Activated CD8-positive, alpha-beta memory T cell treated with anti-CD3 and anti-CD28 coated beads, Interleukin-2, amount 10 ng/mL, durations not matched to agents 7 days and 5 days (primary cell): ENCODE measurements at regions of chr12 and their contacts with region 1.

Region 1: DNA sequence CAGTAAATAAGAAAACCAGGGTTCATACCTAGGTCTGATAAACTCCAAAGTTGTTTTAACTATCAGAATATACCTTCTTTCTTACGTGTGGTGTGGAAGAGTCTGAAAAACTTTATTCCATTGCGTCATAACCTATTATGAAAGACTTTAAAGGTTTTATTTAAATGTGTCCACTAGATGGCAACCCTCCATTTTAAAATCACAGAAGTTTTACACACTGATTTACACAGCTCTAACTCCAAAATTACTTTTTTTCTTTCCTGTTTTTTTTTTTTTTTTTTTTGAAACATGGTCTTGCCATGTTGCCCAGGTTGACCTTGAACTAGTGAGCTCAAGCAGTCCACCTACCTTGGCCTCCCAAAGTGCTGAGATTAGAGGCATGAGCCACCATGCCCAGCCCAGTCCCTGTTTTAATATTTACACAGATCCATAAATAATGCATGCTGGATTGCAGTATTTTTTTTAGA is 17.3 kb upstream of the TMPRSS12 start:
- DNase-seq: no peak
- ATAC-seq: peak; percentile 69
- H3K4me3 Mint-ChIP-seq: no peak overlapping the region
- H3K27ac Mint-ChIP-seq: peak overlapping the region; percentile 38
- H3K4me1 Mint-ChIP-seq: peaks cover 4% of the 10 kb centered on the region
- H3K27me3 Mint-ChIP-seq: no peaks in the 10 kb centered on the region

Region 2: GRCh38 chr12:50916292-50916691 is 90.9 kb after region 1 on chr12:
- CTCF ChIA-PET with region 1: no interaction called
- DNase-seq: no peak
- ATAC-seq: no peak
- H3K4me3 Mint-ChIP-seq: no peak overlapping the region
- H3K27ac Mint-ChIP-seq: no peak overlapping the region
- H3K4me1 Mint-ChIP-seq: peaks cover 12% of the 10 kb centered on the region
- H3K27me3 Mint-ChIP-seq: no peaks in the 10 kb centered on the region

Region 3: GRCh38 chr12:50986966-50987737 is 161.7 kb after region 1 on chr12:
- CTCF ChIA-PET with region 1: interaction called, 33 read pairs
- DNase-seq: peak; percentile 45
- ATAC-seq: peak; percentile 51
- H3K4me3 Mint-ChIP-seq: no peak overlapping the region
- H3K27ac Mint-ChIP-seq: no peak overlapping the region
- H3K4me1 Mint-ChIP-seq: peaks cover 14% of the 10 kb centered on the region
- H3K27me3 Mint-ChIP-seq: no peaks in the 10 kb centered on the region

Region 4: DNA sequence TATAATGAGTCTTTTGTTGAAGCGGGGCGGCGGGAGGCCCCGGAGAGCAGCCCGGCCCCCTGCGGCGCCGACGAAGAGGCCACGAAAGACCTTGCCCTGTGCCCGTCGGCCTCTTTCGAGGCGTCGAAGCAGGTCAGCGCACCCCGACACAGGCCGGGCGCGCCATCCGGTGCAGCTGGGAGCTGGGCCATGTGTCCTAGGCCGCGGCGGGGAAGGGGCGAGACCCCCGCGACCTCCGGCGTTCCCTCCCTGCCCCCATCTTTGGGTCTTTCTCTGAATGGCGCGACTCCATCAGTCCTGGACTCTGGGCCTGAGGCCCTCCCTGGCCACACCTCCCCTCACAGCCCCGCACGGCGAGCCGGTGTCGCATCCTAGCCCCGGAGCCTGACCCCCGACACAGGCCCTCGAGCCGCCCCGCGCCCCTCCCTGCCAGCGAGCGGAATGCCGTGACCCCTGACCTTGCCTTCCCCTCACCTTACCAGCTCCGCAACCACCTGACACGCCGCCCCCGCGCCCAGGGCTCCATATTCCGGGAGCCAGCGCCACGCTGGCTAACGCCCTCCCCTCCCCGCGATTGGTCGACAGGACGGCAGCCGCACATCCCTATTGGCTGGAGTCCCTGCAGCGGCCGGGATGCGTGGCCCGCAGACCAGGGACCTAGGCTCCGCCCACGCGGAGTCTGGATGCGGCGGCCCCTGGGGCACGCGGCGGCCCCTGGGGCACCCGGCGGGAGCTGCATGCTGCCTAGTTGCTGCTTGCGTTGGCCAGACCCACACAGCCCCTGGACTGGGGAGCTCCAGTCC is 200.6 kb after region 1 on chr12 and contains the start of gene SLC11A2:
- CTCF ChIA-PET with region 1: interaction called, 15 read pairs
- DNase-seq: peak; percentile 95
- ATAC-seq: peak; percentile 96
- H3K4me3 Mint-ChIP-seq: peak within 1 kb of the TSS; percentile 87
- H3K27ac Mint-ChIP-seq: peak within 1 kb of the TSS; percentile 90
- H3K4me1 Mint-ChIP-seq: peaks cover 44% of the 10 kb centered on the region
- H3K27me3 Mint-ChIP-seq: peaks cover 6% of the 10 kb centered on the region
- total RNA-seq, gene SLC11A2: 38.2 to 42.3 TPM